Right ventricle myocardium inferior (tissue), 1 donor: ENCODE measurements at regions of chr3 and their contacts with region 1.

Region 1: GRCh38 chr3:49411968-49412631 is at the starts of genes RHOA and TCTA:
- DNase-seq: peak; percentile 100
- ATAC-seq: peak; percentile 96
- total RNA-seq, gene RHOA: 285 TPM
- total RNA-seq, gene TCTA: 17.1 TPM

Region 2: DNA sequence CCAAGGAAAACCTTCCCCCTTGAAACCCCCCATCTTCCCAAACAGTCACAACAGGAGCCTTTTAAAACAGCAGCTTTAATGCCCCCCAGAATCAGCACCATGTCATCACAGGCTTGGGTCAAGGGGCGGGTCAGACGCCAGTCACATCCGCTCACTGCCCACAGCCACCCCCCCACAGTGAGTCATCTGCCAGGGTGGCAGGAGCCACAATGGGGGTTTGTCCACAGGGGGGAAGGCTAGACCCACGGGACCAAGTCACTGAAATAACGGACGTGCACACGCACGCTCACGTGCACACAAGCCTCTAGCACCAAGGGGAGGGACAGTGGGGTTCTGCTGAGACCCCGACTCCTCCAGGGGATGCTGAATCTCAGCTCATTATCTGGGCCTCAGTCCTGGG is 848.1 kb before region 1 on chr3:
- intact Hi-C with region 1: no loop called
- DNase-seq: no peak
- ATAC-seq: no peak

Region 3: DNA sequence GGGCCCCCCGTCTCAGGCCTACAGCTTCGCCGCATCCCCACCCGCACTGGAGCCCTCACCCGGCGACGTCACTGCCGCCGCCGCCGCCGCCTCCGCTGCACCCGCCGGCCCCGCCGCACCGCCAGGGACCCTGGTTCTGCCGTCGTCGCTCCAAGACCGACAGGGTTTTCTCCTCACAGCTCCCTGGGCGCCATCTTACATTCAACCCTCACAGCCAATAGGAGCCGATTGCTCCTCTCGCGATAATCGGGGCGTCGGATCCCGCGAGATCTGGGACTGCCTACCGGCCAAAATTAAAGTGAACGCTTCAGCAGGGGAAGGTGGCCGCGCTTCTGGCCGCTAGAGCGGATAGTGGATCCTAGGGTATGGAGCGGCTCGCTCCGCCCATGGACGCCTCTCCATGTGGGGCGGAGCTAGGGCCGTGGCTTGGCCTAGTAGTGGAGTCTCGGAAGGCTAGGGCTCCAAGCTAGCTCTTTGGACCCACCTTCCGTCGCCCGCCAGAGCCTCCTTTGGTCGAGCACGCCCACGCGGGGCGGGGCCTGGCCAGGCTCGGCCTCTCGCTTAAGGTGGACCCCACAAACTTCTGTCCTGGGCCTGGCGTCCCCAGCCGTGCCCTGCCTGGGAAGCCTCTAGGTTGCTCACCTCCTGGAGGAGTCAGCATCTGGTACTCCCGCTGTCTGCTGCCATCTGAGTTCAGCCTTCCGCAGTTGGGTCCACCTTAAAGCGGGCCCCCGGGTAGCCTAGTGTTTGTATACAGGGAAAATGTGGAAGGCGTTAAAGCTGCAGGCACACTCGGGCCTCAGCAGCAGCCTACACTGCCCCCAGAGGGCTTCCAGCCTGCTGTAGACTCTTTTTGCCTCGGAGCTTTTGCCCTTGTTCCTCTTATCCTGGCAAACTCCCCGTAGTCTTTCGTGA is 318.0 kb before region 1 on chr3 and contains the start of gene QRICH1:
- intact Hi-C with region 1: loop called (anchors 1 kb)
- DNase-seq: peak; percentile 98
- ATAC-seq: peak; percentile 94
- total RNA-seq, gene QRICH1: 52.9 TPM

Region 4: DNA sequence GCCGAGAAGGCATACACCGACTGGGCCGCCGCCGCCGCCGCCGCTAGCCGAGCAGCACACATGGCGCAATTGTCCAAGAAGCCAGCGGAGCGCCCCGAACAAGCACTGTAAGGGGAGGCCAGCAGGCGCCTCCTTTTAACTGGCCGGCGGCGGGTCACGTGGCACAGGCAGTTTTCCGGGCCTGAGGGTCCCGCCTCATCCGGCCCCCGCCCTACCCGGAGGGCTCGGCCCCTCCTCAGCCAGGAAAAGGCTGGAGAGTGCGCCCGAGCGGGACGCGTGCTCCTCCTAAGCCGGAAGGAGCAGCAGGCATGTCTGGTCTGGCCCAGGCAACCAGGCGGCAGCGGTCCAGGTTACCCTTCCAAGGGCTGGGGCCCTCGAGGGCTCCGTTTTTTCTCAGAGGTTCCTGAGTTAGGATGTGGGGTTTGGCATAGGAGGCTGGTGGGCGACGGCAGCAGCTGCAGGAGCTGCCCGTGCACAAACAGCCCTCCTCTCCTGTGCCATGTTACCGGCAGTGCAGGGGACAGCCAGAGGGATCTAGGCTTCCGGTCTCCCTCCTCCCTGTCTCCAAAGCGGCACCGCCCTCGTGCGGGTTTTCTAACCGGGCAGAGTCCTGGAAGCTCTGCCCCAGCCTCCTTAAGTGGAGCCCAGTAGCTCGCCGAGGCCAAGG is 53.8 kb before region 1 on chr3 and contains the start of gene GPX1:
- intact Hi-C with region 1: loop called (anchors 5 kb)
- DNase-seq: peak; percentile 97
- ATAC-seq: peak; percentile 96
- total RNA-seq, gene GPX1: 136 TPM